ENCODE measurements at regions of chr2 and their contacts with region 1.

Region 1: GRCh38 chr2:30165050-30165520 is 18.3 kb downstream of the YPEL5 start:
- DNase-seq: peak; percentile 83
- H3K4me3 ChIP-seq: no peak overlapping the region
- H3K27ac ChIP-seq: no peak overlapping the region
- H3K27me3 ChIP-seq: no peaks in the 10 kb centered on the region
- CTCF ChIP-seq: peak; percentile 93

Region 2: DNA sequence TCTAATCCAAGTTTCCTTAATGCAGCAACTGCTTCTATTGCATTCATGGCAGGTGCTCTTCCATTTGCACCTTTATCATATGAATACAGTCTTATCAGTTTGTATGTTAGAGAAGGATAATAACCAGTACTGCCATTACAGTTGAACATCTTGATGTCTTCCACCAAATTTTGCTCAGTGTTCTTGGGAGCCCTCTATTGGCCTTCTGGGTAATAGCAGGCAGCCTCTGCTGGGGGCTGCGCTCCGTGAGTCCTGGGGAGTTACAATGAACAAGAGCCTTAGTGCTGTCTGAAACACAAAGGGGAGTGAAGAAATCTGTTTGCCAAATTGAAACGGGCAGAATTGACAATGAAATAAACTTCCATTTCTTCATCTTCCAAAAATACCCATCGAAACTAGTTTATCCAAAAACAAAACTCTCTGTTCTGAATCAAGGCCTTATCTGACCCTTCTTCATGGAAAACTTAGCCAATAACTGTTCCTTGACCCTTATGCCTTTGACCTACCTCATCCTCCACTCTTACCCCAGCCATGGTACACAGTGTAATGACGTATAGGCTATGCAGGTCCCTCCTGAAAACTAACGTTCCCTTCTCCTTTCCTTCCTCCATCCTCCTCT is 323.6 kb before region 1 on chr2:
- CTCF ChIA-PET with region 1: no interaction called
- POLR2A ChIA-PET with region 1: no interaction called
- DNase-seq: peak; percentile 3
- H3K4me3 ChIP-seq: no peak overlapping the region
- H3K27ac ChIP-seq: no peak overlapping the region
- H3K27me3 ChIP-seq: peaks cover 4% of the 10 kb centered on the region
- CTCF ChIP-seq: peak; percentile 99

Region 3: GRCh38 chr2:30185186-30185585 is 20.1 kb after region 1 on chr2:
- CTCF ChIA-PET with region 1: interaction called, 56 read pairs
- POLR2A ChIA-PET with region 1: no interaction called
- DNase-seq: peak; percentile 21
- H3K4me3 ChIP-seq: no peak overlapping the region
- H3K27ac ChIP-seq: no peak overlapping the region
- H3K27me3 ChIP-seq: peaks cover 7% of the 10 kb centered on the region
- CTCF ChIP-seq: no peak

Region 4: DNA sequence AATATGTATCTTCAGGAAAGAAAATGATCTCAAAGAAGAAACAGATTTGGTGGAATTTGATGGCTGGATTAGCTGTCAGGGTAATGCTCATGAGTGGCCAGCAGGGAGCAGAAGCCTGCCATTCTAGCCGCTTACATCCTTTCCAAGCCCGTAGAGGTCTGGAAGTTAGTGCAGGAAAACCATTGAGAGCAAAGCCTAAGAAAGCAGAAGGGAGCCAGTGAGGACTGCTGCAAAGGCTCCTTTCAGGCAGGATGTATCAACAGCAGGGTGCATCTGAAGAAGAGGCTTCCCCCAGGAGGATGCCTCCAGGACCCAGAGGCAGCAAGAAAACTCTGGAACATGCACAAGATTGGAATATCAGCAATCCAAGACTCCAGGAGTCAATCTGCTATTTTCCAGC is 43.4 kb after region 1 on chr2:
- CTCF ChIA-PET with region 1: interaction called, 83 read pairs
- POLR2A ChIA-PET with region 1: no interaction called
- DNase-seq: peak; percentile 73
- H3K4me3 ChIP-seq: no peak overlapping the region
- H3K27ac ChIP-seq: no peak overlapping the region
- H3K27me3 ChIP-seq: peaks cover 13% of the 10 kb centered on the region
- CTCF ChIP-seq: peak; percentile 96

Region 5: DNA sequence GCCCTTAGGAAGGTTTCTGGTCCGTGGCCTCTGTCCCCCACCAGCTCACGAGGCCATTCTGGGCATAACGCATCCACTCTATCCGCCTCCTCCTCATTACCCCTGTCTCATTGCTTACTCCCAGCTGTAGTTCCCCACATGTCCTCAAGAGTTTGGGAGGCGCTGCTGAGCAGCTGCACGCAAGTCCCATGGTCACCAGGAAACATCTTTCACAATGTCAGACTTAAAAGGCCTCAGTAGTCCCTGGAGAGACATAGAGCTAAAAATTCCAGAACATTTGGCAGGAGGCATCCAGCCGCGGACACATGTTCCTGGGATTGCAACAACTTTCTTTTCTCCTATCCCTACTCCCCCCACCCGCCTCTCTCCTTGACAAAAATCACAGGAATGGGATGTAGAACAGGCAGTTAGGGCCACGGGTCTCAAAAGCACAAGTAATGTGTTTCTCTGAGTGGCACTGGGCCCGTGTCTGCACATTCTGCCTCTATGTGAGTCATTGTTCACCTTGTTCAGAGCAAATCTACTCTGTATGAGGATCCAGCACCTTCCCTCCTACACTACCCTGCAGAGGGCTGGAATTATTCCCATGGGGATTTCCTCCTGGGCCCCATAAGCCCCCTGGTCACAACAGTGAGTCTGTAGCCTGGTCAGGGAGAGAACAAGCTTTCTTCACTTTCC is 74.4 kb after region 1 on chr2:
- CTCF ChIA-PET with region 1: interaction called, 18 read pairs
- POLR2A ChIA-PET with region 1: no interaction called
- DNase-seq: no peak
- H3K4me3 ChIP-seq: no peak overlapping the region
- H3K27ac ChIP-seq: peak overlapping the region; percentile 63
- H3K27me3 ChIP-seq: no peaks in the 10 kb centered on the region
- CTCF ChIP-seq: peak; percentile 93

Region 6: DNA sequence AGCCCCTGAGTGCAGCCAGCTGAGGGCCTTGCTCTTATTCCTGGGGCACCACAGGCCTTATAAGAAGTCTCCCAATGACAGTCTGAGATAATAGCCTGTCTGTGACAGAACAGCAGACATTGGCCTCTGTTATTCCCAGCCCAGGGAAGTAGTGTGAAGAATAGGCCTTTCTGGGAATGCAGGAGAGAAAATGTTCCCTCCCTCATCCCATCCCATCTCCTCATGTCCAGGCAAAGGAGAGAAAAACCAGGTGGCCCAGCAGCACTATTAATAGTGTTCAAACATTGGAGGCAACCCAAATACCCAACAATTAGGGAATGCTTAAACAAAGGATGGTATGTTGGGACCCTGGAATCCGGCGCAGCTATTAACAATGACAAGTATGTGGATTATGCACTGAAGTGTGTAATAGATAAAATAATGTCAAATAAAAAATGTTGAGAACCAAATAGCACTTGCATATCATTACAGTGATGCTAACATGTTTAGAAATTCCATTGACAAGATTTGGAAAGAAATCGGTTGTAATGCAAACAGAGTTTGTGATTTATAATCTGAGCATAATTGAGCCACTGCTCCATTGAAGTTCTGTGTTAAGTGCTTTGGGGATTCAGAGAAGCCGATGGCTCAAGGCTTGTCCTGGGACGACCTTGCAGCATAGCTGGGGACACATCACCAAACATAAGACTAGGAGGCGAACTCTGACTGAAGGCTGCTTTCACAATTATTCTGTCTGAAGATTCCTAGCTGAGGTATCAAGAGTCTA is 135.6 kb after region 1 on chr2:
- CTCF ChIA-PET with region 1: interaction called, 14 read pairs
- POLR2A ChIA-PET with region 1: interaction called, 4 read pairs
- DNase-seq: peak; percentile 96
- H3K4me3 ChIP-seq: no peak overlapping the region
- H3K27ac ChIP-seq: peak overlapping the region; percentile 99
- H3K27me3 ChIP-seq: no peaks in the 10 kb centered on the region
- CTCF ChIP-seq: no peak

Region 7: GRCh38 chr2:30321466-30321865 is 156.4 kb after region 1 on chr2:
- CTCF ChIA-PET with region 1: no interaction called
- POLR2A ChIA-PET with region 1: no interaction called
- DNase-seq: peak; percentile 10
- H3K4me3 ChIP-seq: no peak overlapping the region
- H3K27ac ChIP-seq: no peak overlapping the region
- H3K27me3 ChIP-seq: no peaks in the 10 kb centered on the region
- CTCF ChIP-seq: no peak

Region 8: GRCh38 chr2:30862054-30862651 is 697.1 kb after region 1 on chr2:
- CTCF ChIA-PET with region 1: interaction called, 16 read pairs
- POLR2A ChIA-PET with region 1: no interaction called
- DNase-seq: peak; percentile 24
- H3K4me3 ChIP-seq: no peak overlapping the region
- H3K27ac ChIP-seq: no peak overlapping the region
- H3K27me3 ChIP-seq: no peaks in the 10 kb centered on the region
- CTCF ChIP-seq: peak; percentile 69